Activated CD4-positive, alpha-beta memory T cell treated with anti-CD3 and anti-CD28 coated beads for 36 hours (primary cell): ENCODE measurements at regions of chr19 and their contacts with region 1.

Region 1: DNA sequence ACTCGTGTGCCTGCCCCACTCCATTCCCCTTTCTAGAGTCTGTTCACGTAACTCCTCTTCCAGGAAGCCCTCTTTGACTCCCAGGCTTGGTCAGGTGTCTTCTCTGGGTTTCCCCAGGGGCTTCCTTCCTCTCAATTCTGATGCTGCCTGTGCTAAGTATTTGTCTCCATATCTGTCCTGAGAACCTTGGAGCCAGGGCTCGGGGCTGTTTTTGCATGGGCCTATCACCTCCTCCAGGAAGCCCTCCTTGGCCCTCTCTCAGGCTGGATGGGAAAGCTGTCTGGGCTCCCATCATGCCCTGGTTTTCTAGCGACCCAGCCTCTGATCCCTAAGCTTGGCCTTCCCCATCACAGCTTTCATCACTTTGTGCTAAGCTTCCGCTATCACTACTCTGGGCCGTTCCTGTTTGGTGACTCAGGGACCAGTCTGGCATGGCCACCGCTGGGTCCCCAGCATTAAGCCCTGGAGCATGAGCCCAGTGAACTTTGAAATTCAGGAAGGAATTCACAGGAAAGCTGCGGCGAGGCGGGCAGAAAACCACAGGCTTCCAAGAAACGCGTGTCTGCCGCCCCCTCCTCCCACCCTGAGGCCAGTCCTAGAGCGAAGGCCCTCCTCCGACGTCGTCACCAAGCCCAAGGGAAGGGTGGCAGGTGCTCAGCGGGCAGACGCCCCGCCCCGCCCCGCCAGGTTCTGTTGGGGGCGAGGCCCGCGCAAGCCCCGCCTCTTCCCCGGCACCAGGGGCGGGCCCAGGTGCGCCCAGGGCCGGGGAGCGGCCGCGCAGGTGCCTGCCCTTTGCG is 486 bp upstream of the SPINT2 start:
- DNase-seq: peak; percentile 90
- H3K4me3 Mint-ChIP-seq: peak overlapping the region; percentile 79
- H3K27ac Mint-ChIP-seq: peak overlapping the region; percentile 96
- H3K4me1 Mint-ChIP-seq: peaks cover 33% of the 10 kb centered on the region
- H3K27me3 Mint-ChIP-seq: peaks cover 3% of the 10 kb centered on the region

Region 2: GRCh38 chr19:38213911-38214625 is 49.8 kb before region 1 on chr19:
- CTCF ChIA-PET with region 1: no interaction called
- POLR2A ChIA-PET with region 1: no interaction called
- intact Hi-C with region 1: no loop called
- DNase-seq: peak; percentile 87
- H3K4me3 Mint-ChIP-seq: peak overlapping the region; percentile 65
- H3K27ac Mint-ChIP-seq: peak overlapping the region; percentile 76
- H3K4me1 Mint-ChIP-seq: peaks cover 23% of the 10 kb centered on the region
- H3K27me3 Mint-ChIP-seq: peaks cover 59% of the 10 kb centered on the region

Region 3: GRCh38 chr19:38245826-38246498 is 17.9 kb before region 1 on chr19:
- CTCF ChIA-PET with region 1: interaction called, 30 read pairs
- POLR2A ChIA-PET with region 1: no interaction called
- intact Hi-C with region 1: no loop called
- DNase-seq: no peak
- H3K4me3 Mint-ChIP-seq: no peak overlapping the region
- H3K27ac Mint-ChIP-seq: no peak overlapping the region
- H3K4me1 Mint-ChIP-seq: peaks cover 2% of the 10 kb centered on the region
- H3K27me3 Mint-ChIP-seq: no peaks in the 10 kb centered on the region

Region 4: GRCh38 chr19:38315657-38316476 is 52.0 kb after region 1 on chr19 and contains the start of gene YIF1B:
- CTCF ChIA-PET with region 1: interaction called, 3 read pairs
- POLR2A ChIA-PET with region 1: interaction called, 3 read pairs
- intact Hi-C with region 1: loop called (anchors 1 kb)
- DNase-seq: peak; percentile 98
- H3K4me3 Mint-ChIP-seq: peak within 1 kb of the TSS; percentile 83
- H3K27ac Mint-ChIP-seq: peak within 1 kb of the TSS; percentile 88
- H3K4me1 Mint-ChIP-seq: peaks cover 38% of the 10 kb centered on the region
- H3K27me3 Mint-ChIP-seq: no peaks in the 10 kb centered on the region
- total RNA-seq, gene YIF1B: 79.7 to 82.3 TPM

Region 5: GRCh38 chr19:38387550-38388348 is 123.9 kb after region 1 on chr19 and contains the start of gene GGN:
- CTCF ChIA-PET with region 1: no interaction called
- POLR2A ChIA-PET with region 1: no interaction called
- intact Hi-C with region 1: loop called (anchors 5 kb)
- DNase-seq: peak; percentile 92
- H3K4me3 Mint-ChIP-seq: peak within 1 kb of the TSS; percentile 78
- H3K27ac Mint-ChIP-seq: peak within 1 kb of the TSS; percentile 69
- H3K4me1 Mint-ChIP-seq: peaks cover 25% of the 10 kb centered on the region
- H3K27me3 Mint-ChIP-seq: peaks cover 3% of the 10 kb centered on the region
- total RNA-seq, gene GGN: 0.41 to 1.2 TPM